ENCODE measurements at regions of chr18 and their contacts with region 1.

Region 1: GRCh38 chr18:3665780-3666525 is 216.0 kb downstream of the TGIF1 start:
- DNase-seq: peak; percentile 82
- H3K4me3 ChIP-seq: peak overlapping the region in 1 of 2 experiments; percentile 41; a peak in 1 of 4 replicates
- H3K27ac ChIP-seq: peak overlapping the region; percentile 37 to 53; a peak in 2 of 4 replicates
- H3K4me1 ChIP-seq: peaks cover 5 to 18% of the 10 kb centered on the region in 2 experiments; a peak in 2 of 4 replicates
- H3K27me3 ChIP-seq: no peaks in the 10 kb centered on the region
- CTCF ChIP-seq: peak; percentile 96
- EP300 ChIP-seq: no peak
- RAD21 ChIP-seq: peak; percentile 98

Region 2: GRCh38 chr18:2846636-2847364 is 819.2 kb before region 1 on chr18 and contains the start of gene EMILIN2:
- CTCF ChIA-PET with region 1: no interaction called
- POLR2A ChIA-PET with region 1: no interaction called
- DNase-seq: peak; percentile 63
- H3K4me3 ChIP-seq: peak within 1 kb of the TSS; percentile 14 to 49
- H3K27ac ChIP-seq: no peak within 1 kb of the TSS
- H3K4me1 ChIP-seq: no peaks in the 10 kb centered on the region; a peak in 1 of 4 replicates
- H3K27me3 ChIP-seq: peaks cover 56% of the 10 kb centered on the region
- CTCF ChIP-seq: no peak
- EP300 ChIP-seq: no peak
- RAD21 ChIP-seq: no peak
- polyA plus RNA-seq, gene EMILIN2: 1.4 and 1.6 TPM in 2 replicates

Region 3: GRCh38 chr18:3281456-3282400 is 384.2 kb before region 1 on chr18:
- CTCF ChIA-PET with region 1: interaction called, 233 read pairs
- POLR2A ChIA-PET with region 1: interaction called, 3 read pairs
- DNase-seq: peak; percentile 59
- H3K4me3 ChIP-seq: no peak overlapping the region; a peak in 1 of 4 replicates
- H3K27ac ChIP-seq: peak overlapping the region; percentile 30 to 53; a peak in 3 of 4 replicates
- H3K4me1 ChIP-seq: peaks cover 4 to 25% of the 10 kb centered on the region in 2 experiments; a peak in 3 of 4 replicates
- H3K27me3 ChIP-seq: no peaks in the 10 kb centered on the region
- CTCF ChIP-seq: peak; percentile 71
- EP300 ChIP-seq: no peak
- RAD21 ChIP-seq: peak; percentile 89

Region 4: DNA sequence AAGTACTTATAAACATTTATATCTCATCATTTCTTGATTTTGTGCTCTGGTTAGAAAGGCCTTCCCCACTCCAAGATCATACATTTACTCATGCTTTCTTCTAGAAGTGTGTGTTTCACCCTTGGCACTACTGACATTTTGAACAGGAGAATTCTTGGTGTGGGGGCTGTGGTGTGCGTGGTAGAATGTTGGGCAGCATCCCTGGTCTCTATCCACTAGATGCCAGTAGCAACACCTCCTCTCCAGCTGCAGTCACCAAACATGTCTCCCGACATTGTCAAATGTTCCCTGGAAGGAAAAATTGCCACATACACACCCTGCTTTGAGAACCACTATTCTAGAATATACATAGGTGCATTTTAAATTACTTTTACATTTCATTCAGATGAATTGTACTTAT is 224.7 kb before region 1 on chr18:
- CTCF ChIA-PET with region 1: interaction called, 15 read pairs
- POLR2A ChIA-PET with region 1: no interaction called
- DNase-seq: peak; percentile 40
- H3K4me3 ChIP-seq: no peak overlapping the region
- H3K27ac ChIP-seq: no peak overlapping the region
- H3K4me1 ChIP-seq: peaks cover 3 to 4% of the 10 kb centered on the region in 2 experiments; a peak in 3 of 4 replicates
- H3K27me3 ChIP-seq: no peaks in the 10 kb centered on the region
- CTCF ChIP-seq: peak; percentile 43
- EP300 ChIP-seq: no peak
- RAD21 ChIP-seq: peak; percentile 70

Region 5: GRCh38 chr18:3585656-3586509 is 80.1 kb before region 1 on chr18:
- CTCF ChIA-PET with region 1: interaction called, 17 read pairs
- POLR2A ChIA-PET with region 1: no interaction called
- DNase-seq: peak; percentile 73
- H3K4me3 ChIP-seq: no peak overlapping the region
- H3K27ac ChIP-seq: peak overlapping the region in 1 of 2 experiments; percentile 24; a peak in 1 of 4 replicates
- H3K4me1 ChIP-seq: peaks cover 0 to 11% of the 10 kb centered on the region in 2 experiments; a peak in 1 of 4 replicates
- H3K27me3 ChIP-seq: no peaks in the 10 kb centered on the region
- CTCF ChIP-seq: peak; percentile 76
- EP300 ChIP-seq: no peak
- RAD21 ChIP-seq: peak; percentile 80

Region 6: DNA sequence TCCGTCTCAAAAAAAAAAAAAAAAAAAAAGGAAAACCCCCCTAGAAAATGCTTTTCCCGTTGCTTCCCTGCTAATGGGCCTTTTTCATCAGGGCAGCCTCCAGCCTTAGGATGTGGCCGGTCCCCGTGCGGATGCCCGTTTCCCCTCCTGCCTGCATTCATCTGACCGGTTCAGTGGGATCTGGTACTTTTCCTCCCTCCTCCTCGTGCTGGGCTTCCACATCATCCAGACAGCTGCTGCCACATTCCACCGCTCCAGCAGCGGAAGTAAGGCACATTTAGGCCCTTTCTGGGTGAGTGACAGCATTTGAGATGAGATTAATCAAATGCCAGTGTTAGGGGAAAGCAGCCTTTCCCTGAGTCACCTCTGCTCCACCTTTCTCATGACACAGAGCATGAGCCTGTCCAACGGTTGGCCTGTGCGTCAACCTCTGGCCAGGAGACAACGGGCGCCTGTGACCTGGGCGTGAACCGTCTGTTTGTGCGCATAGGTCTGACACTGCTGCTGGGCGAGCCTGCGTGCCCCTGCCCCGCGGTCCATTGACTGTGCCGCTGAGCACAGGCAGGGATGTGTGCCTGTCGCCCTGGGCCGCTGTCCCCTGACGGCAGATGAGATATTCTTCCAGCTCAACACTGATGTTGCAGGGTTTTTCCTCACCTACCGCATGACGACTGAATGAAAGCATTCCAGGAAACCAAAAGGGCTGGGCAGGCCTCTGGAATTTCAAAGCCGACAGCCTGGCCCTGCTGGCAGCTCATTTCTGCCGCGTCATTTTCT is 42.0 kb before region 1 on chr18:
- CTCF ChIA-PET with region 1: interaction called, 24 read pairs
- POLR2A ChIA-PET with region 1: no interaction called
- DNase-seq: peak; percentile 70
- H3K4me3 ChIP-seq: peak overlapping the region; percentile 15 to 53; a peak in 3 of 4 replicates
- H3K27ac ChIP-seq: peak overlapping the region; percentile 89 to 100
- H3K4me1 ChIP-seq: peaks cover 22 to 40% of the 10 kb centered on the region in 2 experiments
- H3K27me3 ChIP-seq: no peaks in the 10 kb centered on the region
- CTCF ChIP-seq: no peak
- EP300 ChIP-seq: peak in 1 of 2 experiments; percentile 96; a peak in 2 of 4 replicates
- RAD21 ChIP-seq: no peak; the same call in 1 of the 2 replicates

Region 7: DNA sequence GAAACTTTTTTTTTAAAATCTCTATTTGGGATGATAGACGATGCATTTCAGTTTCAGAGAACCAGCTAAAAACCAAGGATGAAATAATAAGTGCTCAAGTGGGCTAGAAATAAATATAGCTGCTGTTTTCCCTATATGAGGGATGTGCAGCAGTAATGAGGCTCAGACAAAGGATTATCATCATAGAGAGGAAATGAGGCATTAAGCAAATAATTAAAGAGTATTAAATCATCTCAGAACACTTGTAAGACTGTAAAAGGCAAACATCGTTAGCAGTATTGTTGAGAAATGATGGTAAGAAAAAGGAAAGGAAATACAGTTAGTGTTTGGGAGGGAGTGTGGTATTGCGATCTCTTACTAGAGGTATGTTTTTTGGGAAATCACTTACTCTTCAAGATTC is 17.5 kb after region 1 on chr18:
- CTCF ChIA-PET with region 1: interaction called, 43 read pairs
- POLR2A ChIA-PET with region 1: no interaction called
- DNase-seq: no peak
- H3K4me3 ChIP-seq: no peak overlapping the region
- H3K27ac ChIP-seq: no peak overlapping the region
- H3K4me1 ChIP-seq: no peaks in the 10 kb centered on the region; a peak in 1 of 4 replicates
- H3K27me3 ChIP-seq: no peaks in the 10 kb centered on the region
- CTCF ChIP-seq: no peak
- EP300 ChIP-seq: no peak
- RAD21 ChIP-seq: no peak

Region 8: GRCh38 chr18:3869848-3870247 is 203.9 kb after region 1 on chr18:
- CTCF ChIA-PET with region 1: no interaction called
- POLR2A ChIA-PET with region 1: no interaction called
- DNase-seq: peak; percentile 26
- H3K4me3 ChIP-seq: no peak overlapping the region
- H3K27ac ChIP-seq: no peak overlapping the region
- H3K4me1 ChIP-seq: peaks cover 0 to 6% of the 10 kb centered on the region in 2 experiments; a peak in 1 of 4 replicates
- H3K27me3 ChIP-seq: peaks cover 39% of the 10 kb centered on the region
- CTCF ChIP-seq: peak; percentile 64
- EP300 ChIP-seq: no peak
- RAD21 ChIP-seq: peak; percentile 69